OCI-LY7 (cell line): ENCODE measurements at regions of chr7 and their contacts with region 1.

Region 1: GRCh38 chr7:142338633-142339501 is 81.0 kb upstream of the PRSS58 start:
- DNase-seq: no peak
- H3K4me3 ChIP-seq: no peak overlapping the region
- H3K27ac ChIP-seq: no peak overlapping the region
- H3K4me1 ChIP-seq: no peaks in the 10 kb centered on the region
- CTCF ChIP-seq: peak; percentile 45

Region 2: DNA sequence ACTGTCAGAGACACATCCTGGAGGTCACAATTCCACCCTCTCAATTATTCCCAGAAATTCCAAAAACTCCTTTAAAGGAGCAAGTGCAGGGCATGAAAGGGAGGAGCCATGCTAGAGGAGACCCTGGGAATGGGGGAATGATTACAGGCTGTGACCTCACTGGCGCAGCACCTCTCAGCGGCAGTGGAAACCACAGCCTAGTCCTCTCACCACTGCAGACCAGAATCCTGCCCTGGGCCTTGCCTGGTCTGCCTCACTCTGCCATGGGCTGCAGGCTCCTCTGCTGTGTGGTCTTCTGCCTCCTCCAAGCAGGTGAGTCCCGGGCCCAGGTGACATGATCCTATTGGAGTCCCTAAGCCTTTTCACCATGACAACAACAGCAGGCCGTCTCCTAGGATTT is 30.5 kb before region 1 on chr7:
- CTCF ChIA-PET with region 1: no interaction called
- POLR2A ChIA-PET with region 1: no interaction called
- intact Hi-C with region 1: loop called (anchors 2 kb)
- DNase-seq: no peak
- H3K4me3 ChIP-seq: no peak overlapping the region
- H3K27ac ChIP-seq: no peak overlapping the region
- H3K4me1 ChIP-seq: peaks cover 42% of the 10 kb centered on the region
- CTCF ChIP-seq: no peak

Region 3: GRCh38 chr7:142355328-142355727 is 16.5 kb after region 1 on chr7:
- CTCF ChIA-PET with region 1: no interaction called
- POLR2A ChIA-PET with region 1: no interaction called
- intact Hi-C with region 1: loop called (anchors 1 kb)
- DNase-seq: no peak
- H3K4me3 ChIP-seq: no peak overlapping the region
- H3K27ac ChIP-seq: no peak overlapping the region
- H3K4me1 ChIP-seq: peaks cover 3% of the 10 kb centered on the region
- CTCF ChIP-seq: no peak